Transverse colon (tissue), 4 donors: ENCODE measurements at regions of chr2 and their contacts with region 1.

Region 1: DNA sequence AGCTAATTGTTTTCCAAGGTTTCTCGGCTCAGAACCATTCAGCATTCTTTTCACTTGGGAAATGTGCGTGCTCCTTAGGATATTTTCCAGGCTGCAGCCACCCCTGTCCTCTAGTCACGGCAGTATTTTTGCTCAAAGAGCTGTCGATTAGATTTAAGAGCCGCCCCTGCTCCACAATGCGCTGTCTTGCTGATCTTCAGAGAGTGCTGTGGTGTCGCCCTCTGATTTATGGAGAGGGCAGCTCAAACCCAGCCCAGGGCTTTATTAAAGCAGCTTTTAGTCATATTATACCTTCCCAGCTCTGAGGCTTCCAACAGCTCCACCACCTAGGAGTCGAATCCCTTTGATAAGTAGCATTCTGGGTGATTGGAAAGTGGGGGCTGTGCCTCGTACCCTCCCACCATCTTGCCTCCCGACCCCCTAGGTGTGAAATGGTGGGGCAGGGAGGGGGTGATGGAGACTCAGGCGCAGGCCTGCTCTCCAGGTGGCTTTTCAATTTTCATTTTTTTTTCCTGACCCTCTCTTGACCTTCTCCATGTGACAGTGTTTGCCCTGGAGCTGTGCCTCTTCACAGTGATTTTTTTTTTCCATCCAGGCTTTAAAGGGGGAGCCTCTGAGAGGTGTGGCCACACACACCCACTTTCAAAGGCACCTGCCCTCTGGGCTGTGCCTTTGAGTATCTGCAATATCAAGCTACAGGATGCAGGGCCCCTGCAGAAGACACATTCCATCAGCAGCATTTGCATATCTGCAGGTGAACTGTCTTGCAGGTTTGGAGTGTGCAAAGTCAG is 53.1 kb upstream of the NRP2 start:
- DNase-seq: no peak
- H3K4me3 ChIP-seq: no peak overlapping the region
- H3K27ac ChIP-seq: no peak overlapping the region
- H3K4me1 ChIP-seq: no peaks in the 10 kb centered on the region
- H3K27me3 ChIP-seq: no peaks in the 10 kb centered on the region
- CTCF ChIP-seq: no peak
- EP300 ChIP-seq: no peak
- POLR2A ChIP-seq: no peak

Region 2: GRCh38 chr2:204664708-204665121 is 964.5 kb before region 1 on chr2:
- in situ Hi-C with region 1: no loop called
- intact Hi-C with region 1: loop called (anchors 5 kb)
- DNase-seq: no peak
- H3K4me3 ChIP-seq: no peak overlapping the region
- H3K27ac ChIP-seq: no peak overlapping the region
- H3K4me1 ChIP-seq: peaks cover 0 to 4% (median 1%) of the 10 kb centered on the region in 4 donors
- H3K27me3 ChIP-seq: no peaks in the 10 kb centered on the region
- CTCF ChIP-seq: no peak
- EP300 ChIP-seq: no peak
- POLR2A ChIP-seq: no peak

Region 3: GRCh38 chr2:205754924-205755321 is 125.7 kb after region 1 on chr2:
- in situ Hi-C with region 1: no loop called
- intact Hi-C with region 1: no loop called
- DNase-seq: peak; percentile 39
- H3K4me3 ChIP-seq: no peak overlapping the region
- H3K27ac ChIP-seq: peak overlapping the region; percentile 68 to 86 (median 70)
- H3K4me1 ChIP-seq: peaks cover 15 to 60% (median 25%) of the 10 kb centered on the region in 4 donors
- H3K27me3 ChIP-seq: no peaks in the 10 kb centered on the region
- CTCF ChIP-seq: no peak
- EP300 ChIP-seq: no peak
- POLR2A ChIP-seq: no peak

Region 4: DNA sequence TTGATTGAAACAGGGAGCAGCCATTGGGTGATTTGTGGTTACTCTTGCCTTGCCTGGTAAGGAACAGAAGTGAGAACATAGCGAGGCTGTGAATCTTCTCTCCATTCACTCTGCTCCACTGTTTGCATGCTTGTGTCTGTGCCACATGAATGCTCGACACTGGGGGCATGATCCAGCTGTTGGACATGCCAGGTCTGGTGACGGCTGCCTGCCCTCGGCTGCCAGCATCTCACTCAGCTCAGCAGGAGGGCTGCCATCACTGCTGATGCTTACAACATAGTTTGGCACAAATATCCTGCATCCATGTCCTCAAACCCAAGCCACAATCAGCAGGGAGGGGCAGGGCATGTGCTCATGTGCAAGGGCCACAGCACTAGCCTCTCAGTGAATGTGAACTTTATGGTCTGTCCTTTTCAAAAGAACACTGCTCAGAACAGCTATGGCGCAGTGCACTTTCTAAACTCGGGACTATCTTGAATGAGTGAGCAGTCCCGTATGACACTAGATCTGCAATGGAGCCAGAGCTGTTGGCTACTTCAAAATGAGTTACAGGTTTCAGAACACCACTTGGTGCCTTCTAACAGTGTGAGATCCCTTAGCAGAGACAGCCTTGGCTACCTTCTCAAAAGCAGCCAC is 179.4 kb after region 1 on chr2:
- in situ Hi-C with region 1: no loop called
- intact Hi-C with region 1: no loop called
- DNase-seq: no peak
- H3K4me3 ChIP-seq: no peak overlapping the region
- H3K27ac ChIP-seq: no peak overlapping the region
- H3K4me1 ChIP-seq: no peaks in the 10 kb centered on the region
- H3K27me3 ChIP-seq: no peaks in the 10 kb centered on the region
- CTCF ChIP-seq: no peak
- EP300 ChIP-seq: no peak
- POLR2A ChIP-seq: no peak